ENCODE measurements at regions of chr22 and their contacts with region 1.

Region 1: GRCh38 chr22:21938071-21938822 is 14.4 kb downstream of the PPM1F start:
- DNase-seq: peak; percentile 96
- CTCF ChIP-seq: peak; percentile 99

Region 2: DNA sequence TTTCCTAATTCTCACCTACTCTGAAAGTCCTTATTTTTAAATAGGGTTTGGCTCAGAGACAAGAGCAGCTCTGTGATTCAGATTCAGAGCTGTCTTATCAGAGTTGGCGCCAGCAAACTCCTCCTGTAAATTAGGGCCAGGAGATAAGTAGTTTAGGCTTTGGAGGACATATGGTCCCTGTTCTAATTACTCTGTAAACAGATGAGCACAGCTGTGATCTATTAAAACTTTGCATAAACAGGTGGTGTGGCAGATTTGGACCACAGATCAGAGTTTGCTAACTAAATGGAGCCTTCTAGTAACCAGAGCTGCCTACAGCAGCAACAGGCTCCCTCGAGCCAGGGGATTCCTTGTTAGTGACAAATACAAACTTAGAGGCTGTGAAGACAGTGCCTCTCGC is 230.6 kb before region 1 on chr22:
- in situ Hi-C with region 1: loop called (anchors 10 kb)
- DNase-seq: no peak
- CTCF ChIP-seq: no peak

Region 3: GRCh38 chr22:21876486-21877176 is 61.6 kb before region 1 on chr22:
- in situ Hi-C with region 1: loop called (anchors 10 kb)
- DNase-seq: peak; percentile 37
- CTCF ChIP-seq: no peak

Region 4: GRCh38 chr22:22043296-22044078 is 105.2 kb after region 1 on chr22:
- in situ Hi-C with region 1: no loop called
- DNase-seq: peak; percentile 70
- CTCF ChIP-seq: no peak